A549 (cell line): ENCODE measurements at regions of chr20 and their contacts with region 1.

Region 1: GRCh38 chr20:4234128-4234527 is 218.8 kb upstream of the RNF24 start:
- DNase-seq: peak in 1 of 2 experiments; percentile 49
- ATAC-seq: peak in 1 of 2 experiments; percentile 22; a peak in 1 of 6 replicates
- H3K4me3 ChIP-seq: no peak overlapping the region
- H3K27ac ChIP-seq: no peak overlapping the region
- H3K4me1 ChIP-seq: 0 out of 3 replicates have a peak, but pooled peaks cover 4% of the 10 kb centered on the region
- CTCF ChIP-seq: no peak
- EP300 ChIP-seq: no peak
- POLR2A ChIP-seq: no peak
- RAD21 ChIP-seq: no peak

Region 2: GRCh38 chr20:4217349-4217773 is 16.8 kb before region 1 on chr20:
- CTCF ChIA-PET with region 1: interaction called, 10 read pairs
- POLR2A ChIA-PET with region 1: no interaction called
- DNase-seq: peak; percentile 69 to 84
- ATAC-seq: peak; percentile 44 to 77; a peak in 4 of 6 replicates
- H3K4me3 ChIP-seq: no peak overlapping the region
- H3K27ac ChIP-seq: peak overlapping the region; percentile 53 to 82; a peak in 5 of 6 replicates
- H3K4me1 ChIP-seq: peaks cover 43% of the 10 kb centered on the region
- CTCF ChIP-seq: no peak
- EP300 ChIP-seq: no peak
- POLR2A ChIP-seq: no peak
- RAD21 ChIP-seq: no peak

Region 3: GRCh38 chr20:4488407-4489339 is 254.5 kb after region 1 on chr20:
- CTCF ChIA-PET with region 1: no interaction called
- POLR2A ChIA-PET with region 1: no interaction called
- DNase-seq: no peak
- ATAC-seq: peak; percentile 58 to 67; a peak in 3 of 6 replicates
- H3K4me3 ChIP-seq: no peak overlapping the region
- H3K27ac ChIP-seq: peak overlapping the region in 1 of 2 experiments; percentile 11; a peak in 1 of 6 replicates
- H3K4me1 ChIP-seq: peaks cover 6% of the 10 kb centered on the region; the same call in 1 of the 3 replicates
- CTCF ChIP-seq: no peak
- EP300 ChIP-seq: no peak
- POLR2A ChIP-seq: no peak
- RAD21 ChIP-seq: no peak